ENCODE measurements at regions of chr2 and their contacts with region 1.

Region 1: GRCh38 chr2:203484266-203485112 is 50.6 kb downstream of the RAPH1 start:
- DNase-seq: no peak
- ATAC-seq: peak; percentile 89
- H3K4me3 ChIP-seq: no peak overlapping the region
- H3K27ac ChIP-seq: no peak overlapping the region
- H3K4me1 ChIP-seq: no peaks in the 10 kb centered on the region
- H3K27me3 ChIP-seq: no peaks in the 10 kb centered on the region
- CTCF ChIP-seq: peak; percentile 62 to 71 (median 67); a peak in 5 of 6 replicates
- POLR2A ChIP-seq: no peak
- RAD21 ChIP-seq: peak; percentile 90

Region 2: GRCh38 chr2:203782262-203782976 is 297.9 kb after region 1 on chr2:
- CTCF ChIA-PET with region 1: no interaction called
- POLR2A ChIA-PET with region 1: no interaction called
- RAD21 ChIA-PET with region 1: no interaction called
- intact Hi-C with region 1: loop called (anchors 1 kb)
- DNase-seq: peak; percentile 61
- ATAC-seq: peak; percentile 98
- H3K4me3 ChIP-seq: no peak overlapping the region
- H3K27ac ChIP-seq: no peak overlapping the region
- H3K4me1 ChIP-seq: peaks cover 0 to 7% of the 10 kb centered on the region in 2 experiments; a peak in 2 of 4 replicates
- H3K27me3 ChIP-seq: no peaks in the 10 kb centered on the region
- CTCF ChIP-seq: peak; percentile 49 to 90 (median 76); a peak in 5 of 6 replicates
- POLR2A ChIP-seq: no peak
- RAD21 ChIP-seq: peak; percentile 71